Right ventricle myocardium inferior (tissue), 1 donor: ENCODE measurements at regions of chr17 and their contacts with region 1.

Region 1: GRCh38 chr17:11997147-11997846 is at the start of gene ZNF18:
- DNase-seq: peak; percentile 99
- ATAC-seq: peak; percentile 100
- total RNA-seq, gene ZNF18: 4.5 TPM

Region 2: DNA sequence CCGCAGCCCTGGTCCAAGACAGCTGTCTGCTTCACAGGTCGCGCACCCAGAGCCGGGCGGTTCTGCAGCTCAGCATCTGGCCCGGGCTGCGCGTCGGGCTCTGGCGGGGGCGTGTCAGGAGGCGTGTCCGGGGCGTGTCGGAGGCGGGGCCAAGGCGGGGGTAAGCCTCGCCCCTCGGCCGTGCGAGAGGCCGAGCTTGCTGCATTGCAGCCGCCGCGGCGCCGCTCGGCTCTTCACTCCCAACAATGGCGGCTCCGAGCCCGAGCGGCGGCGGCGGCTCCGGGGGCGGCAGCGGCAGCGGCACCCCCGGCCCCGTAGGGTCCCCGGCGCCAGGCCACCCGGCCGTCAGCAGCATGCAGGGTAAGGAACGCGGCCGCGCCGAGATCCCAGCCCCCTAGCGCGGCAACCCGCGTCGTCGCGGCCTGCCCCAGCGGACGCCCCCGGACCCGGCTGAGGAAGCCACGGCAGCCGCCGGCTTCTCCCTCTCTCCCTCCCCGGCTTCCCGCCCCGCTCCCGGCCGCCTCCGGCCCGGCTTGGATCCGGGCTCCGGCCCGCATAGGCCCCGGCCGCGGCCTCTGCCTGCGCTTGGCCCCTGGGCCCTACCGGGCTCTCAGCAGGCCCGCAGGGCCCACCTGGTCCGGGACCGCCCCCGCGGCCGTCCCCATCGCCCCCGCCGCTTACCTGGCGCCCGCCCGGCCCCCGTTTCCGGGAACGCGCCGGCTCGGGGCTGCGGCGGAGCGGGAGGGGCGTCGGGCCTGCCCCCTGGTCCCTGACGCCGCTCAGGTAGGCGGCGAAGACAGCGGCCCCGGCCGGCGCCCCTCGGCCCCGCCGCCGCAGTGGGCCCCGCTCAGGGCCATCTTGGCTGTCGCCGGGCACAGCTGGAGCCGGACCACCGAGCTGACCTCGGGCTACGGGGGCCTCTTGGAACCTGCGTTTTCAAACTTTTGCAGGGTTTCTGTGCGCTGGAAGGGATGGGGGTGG is 23.6 kb after region 1 on chr17 and contains the start of gene MAP2K4:
- intact Hi-C with region 1: loop called (anchors 2 kb)
- DNase-seq: peak; percentile 97
- ATAC-seq: peak; percentile 100
- total RNA-seq, gene MAP2K4: 25.7 TPM

Region 3: GRCh38 chr17:12107905-12108304 is 110.6 kb after region 1 on chr17:
- intact Hi-C with region 1: loop called (anchors 10 kb)
- DNase-seq: no peak
- ATAC-seq: no peak